Dorsolateral prefrontal cortex (tissue), 120 donors: ENCODE measurements at regions of chr7 and their contacts with region 1.

Region 1: DNA sequence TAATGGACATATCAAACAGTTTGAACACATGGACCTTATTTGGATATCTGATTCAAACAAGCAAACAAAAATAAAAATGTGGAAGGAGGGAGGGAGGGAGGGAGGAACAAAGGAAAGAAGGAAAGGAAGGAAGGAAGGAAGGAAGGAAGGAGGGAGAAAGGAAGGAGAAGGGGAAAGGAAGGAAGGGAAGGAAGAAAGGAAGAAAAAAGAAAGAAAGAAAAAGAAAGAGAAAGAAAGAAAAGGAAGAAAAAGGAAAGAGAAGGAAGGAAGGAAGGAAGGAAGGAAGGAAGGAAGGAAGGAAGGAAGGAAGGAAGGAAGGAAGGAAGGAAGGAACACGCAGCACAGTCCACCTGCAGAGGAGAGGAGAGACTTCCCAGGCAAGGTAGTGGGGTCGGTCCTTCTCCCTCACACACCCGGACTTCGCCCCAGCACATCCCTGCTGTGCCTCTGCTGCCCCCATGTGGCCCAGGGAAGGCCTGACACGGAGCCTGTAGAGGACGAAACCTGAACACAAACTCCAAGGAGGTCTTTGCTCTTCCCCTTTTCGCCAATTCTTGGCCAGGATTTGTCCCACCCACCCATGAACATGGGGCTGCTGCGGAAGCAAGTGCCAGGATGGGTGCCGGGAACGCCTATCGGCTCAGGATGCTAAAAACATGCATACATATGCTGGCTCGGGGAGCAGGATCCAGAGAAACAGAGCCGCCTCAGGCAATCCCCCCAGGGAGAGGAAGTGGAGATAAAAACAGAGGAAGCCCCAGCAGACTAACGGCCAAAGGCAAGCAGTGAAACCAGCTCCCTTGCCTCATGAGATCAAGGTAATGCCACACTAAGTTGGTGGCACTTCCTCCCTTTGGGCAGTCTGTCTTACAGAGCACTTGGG is 52.3 kb upstream of the DGKI start:
- DNase-seq: peak; percentile 77 to 88 (median 85)
- H3K4me3 ChIP-seq: peak overlapping the region in 18 of 59 donors; percentile 3 to 39 (median 30)
- H3K27ac ChIP-seq: peak overlapping the region in 18 of 59 donors; percentile 6 to 72 (median 42)
- H3K27me3 ChIP-seq: no peaks in the 10 kb centered on the region
- CTCF ChIP-seq: peak; percentile 76 to 97 (median 93)

Region 2: DNA sequence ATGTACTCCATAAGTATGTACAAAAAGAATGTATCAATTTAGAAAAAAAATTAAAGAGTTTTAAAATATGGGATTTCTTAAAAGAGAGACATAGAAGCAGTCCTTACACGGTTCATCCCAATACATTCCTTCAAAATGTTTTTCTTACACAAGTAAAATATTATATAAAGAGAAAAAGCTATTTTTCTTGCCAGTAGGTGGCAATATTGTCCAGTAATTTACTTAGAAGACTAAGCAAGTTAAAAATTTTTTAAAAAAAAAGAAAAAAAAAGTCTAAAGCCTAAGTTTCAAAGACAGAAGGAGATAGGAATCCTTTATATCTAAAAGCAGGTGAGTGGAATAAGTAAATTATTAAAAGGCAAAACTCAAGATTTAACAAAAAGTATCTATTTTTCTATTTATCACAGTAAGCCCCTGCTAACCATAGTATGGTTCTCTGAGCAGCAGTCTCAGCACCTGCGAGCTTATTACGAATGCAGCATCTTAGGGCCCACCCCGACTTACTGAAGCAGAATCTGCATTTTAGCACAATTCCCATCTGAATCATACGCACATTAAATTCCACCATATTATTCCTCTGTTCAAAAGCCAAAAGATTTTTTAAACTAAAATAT is 292.9 kb before region 1 on chr7:
- intact Hi-C with region 1: loop called (anchors 5 kb)
- DNase-seq: no peak
- H3K4me3 ChIP-seq: no peak overlapping the region
- H3K27ac ChIP-seq: no peak overlapping the region
- H3K27me3 ChIP-seq: no peaks in the 10 kb centered on the region
- CTCF ChIP-seq: peak; percentile 54 to 87 (median 74)

Region 3: GRCh38 chr7:137656227-137656849 is 242.7 kb before region 1 on chr7:
- intact Hi-C with region 1: loop called (anchors 2 to 5 kb)
- DNase-seq: peak; percentile 64 to 90 (median 76)
- H3K4me3 ChIP-seq: no peak overlapping the region
- H3K27ac ChIP-seq: peak overlapping the region in 1 of 59 donors; percentile 11
- H3K27me3 ChIP-seq: no peaks in the 10 kb centered on the region
- CTCF ChIP-seq: peak; percentile 66 to 95 (median 88)

Region 4: GRCh38 chr7:137816696-137817320 is 82.3 kb before region 1 on chr7:
- intact Hi-C with region 1: loop called in 1 of 2 experiments (anchors 5 kb)
- DNase-seq: no peak
- H3K4me3 ChIP-seq: no peak overlapping the region
- H3K27ac ChIP-seq: peak overlapping the region in 1 of 59 donors; percentile 41
- H3K27me3 ChIP-seq: no peaks in the 10 kb centered on the region
- CTCF ChIP-seq: peak in 54 of 56 donors; percentile 12 to 67 (median 44)

Region 5: DNA sequence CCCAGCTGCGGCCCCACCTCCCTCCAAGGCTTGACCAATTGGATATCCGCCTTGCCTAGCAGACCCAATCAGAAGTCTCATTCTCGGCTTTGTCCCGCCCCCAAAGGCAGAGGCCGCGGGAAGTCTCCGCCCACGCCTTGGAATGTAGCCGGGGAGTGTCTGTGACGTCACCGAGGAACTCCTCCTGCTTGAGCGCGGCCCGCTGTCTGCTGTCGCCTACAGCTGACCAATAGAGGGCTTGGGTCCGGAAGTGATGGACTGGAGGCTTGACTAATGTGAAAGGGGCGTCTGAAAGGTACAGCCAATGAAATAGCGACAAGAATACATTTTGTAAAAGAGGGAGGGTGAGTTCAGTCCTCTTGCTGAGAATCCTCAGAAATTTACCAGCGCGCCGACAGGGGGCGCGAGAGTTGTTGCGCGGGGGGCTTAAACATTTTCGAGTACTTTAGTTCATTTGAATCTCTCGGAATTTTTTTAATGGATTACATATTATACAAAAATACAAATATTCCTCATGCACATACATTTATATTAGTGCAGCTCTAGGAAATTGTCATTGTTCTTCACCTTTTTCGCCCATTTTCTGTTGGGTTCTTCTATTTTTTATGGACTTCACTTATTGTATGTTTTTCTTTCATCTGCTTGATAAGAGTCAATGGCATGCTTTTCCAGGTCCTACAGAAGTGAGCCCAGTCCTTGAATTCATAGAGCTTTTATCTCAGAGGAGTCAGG is 103.2 kb after region 1 on chr7:
- intact Hi-C with region 1: loop called in 1 of 2 experiments (anchors 2 kb)
- DNase-seq: peak; percentile 98 to 100 (median 99)
- H3K4me3 ChIP-seq: peak overlapping the region; percentile 62 to 99 (median 89)
- H3K27ac ChIP-seq: peak overlapping the region in 58 of 59 donors; percentile 27 to 98 (median 92)
- H3K27me3 ChIP-seq: no peaks in the 10 kb centered on the region
- CTCF ChIP-seq: peak; percentile 84 to 100 (median 95)

Region 6: DNA sequence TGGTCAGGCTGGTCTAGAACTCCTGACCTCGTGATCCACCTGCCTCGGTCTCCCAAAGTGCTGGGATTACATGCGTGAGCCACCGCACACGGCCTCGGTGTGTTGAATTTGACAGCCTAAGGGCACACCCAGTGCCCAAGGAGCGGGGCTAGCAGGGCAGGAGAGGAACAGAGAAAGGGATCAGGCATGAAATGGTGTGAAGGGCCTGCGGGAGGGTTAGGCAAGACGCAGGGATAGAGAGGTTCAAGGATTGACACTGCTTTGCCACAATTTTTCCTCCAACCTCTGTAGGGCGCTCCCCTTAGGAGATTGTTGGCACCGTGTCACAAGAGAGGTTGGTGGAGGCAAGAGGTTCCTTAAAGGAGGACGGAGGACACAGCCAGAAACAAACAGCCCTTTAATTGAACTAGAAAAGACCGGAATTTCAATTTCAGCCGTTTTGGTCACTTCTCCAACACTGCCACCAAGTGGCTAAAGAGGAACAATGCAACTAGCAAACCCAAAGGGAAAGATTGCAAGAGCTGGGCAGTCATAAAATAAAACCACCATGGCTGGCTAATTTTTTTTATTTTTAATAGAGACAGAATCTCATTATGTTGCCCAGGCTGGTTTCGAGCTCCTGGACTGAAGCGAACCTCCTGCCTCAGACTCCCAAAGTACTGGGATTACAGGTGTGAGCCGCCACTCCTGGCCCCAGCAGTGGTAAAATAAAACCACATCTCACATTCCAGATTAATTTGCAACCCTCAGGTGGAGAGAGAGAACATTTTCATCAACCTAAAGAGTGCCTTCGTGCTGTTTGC is 109.7 kb after region 1 on chr7:
- intact Hi-C with region 1: loop called (anchors 1 to 2 kb)
- DNase-seq: peak in 2 of 10 donors; percentile 8 to 26
- H3K4me3 ChIP-seq: peak overlapping the region in 28 of 59 donors; percentile 1 to 48 (median 23)
- H3K27ac ChIP-seq: peak overlapping the region in 16 of 59 donors; percentile 7 to 76 (median 42)
- H3K27me3 ChIP-seq: no peaks in the 10 kb centered on the region
- CTCF ChIP-seq: peak; percentile 84 to 99 (median 95)

Region 7: GRCh38 chr7:138738551-138739335 is 839.7 kb after region 1 on chr7:
- intact Hi-C with region 1: loop called in 1 of 2 experiments (anchors 5 kb)
- DNase-seq: peak; percentile 42 to 97 (median 90)
- H3K4me3 ChIP-seq: peak overlapping the region in 1 of 59 donors; percentile 10
- H3K27ac ChIP-seq: no peak overlapping the region
- H3K27me3 ChIP-seq: no peaks in the 10 kb centered on the region
- CTCF ChIP-seq: peak; percentile 79 to 99 (median 95)